Mammary epithelial cell (primary cell): ENCODE measurements at regions of chr18 and their contacts with region 1.

Region 1: GRCh38 chr18:32552421-32553030 is 81.8 kb upstream of the GAREM1 start:
- DNase-seq: peak; percentile 59
- H3K4me3 ChIP-seq: no peak overlapping the region
- H3K27ac ChIP-seq: no peak overlapping the region
- H3K4me1 ChIP-seq: no peaks in the 10 kb centered on the region
- H3K27me3 ChIP-seq: no peaks in the 10 kb centered on the region
- CTCF ChIP-seq: peak; percentile 81 to 82

Region 2: DNA sequence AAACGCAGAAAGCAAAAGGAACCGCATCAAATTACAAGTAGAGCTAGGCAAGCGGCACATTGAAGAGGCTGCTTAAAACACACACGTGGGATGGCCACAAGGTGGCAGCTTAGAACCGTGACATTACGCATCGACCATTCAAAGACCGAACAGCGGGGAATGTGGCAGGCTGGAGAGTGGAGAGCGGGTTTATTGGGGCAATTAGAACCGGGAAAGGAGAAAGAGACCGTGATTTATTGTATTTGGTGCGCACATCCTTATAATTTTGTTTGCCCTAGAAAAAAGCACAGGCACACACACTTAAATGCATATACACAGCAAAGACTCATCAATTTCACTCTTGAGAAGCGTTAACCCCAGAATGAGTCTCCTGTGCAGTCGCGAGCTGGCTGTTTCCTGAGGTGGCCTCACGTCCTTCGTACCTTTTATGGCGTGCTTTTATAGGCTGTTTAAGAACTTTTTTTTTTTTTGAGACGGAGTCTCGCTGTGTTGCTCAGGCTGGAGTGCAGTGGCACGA is 394.4 kb before region 1 on chr18:
- CTCF ChIA-PET with region 1: interaction called, 4 read pairs
- dilution Hi-C with region 1: no loop called
- in situ Hi-C with region 1: loop called (anchors 5 kb)
- intact Hi-C with region 1: loop called (anchors 1 kb)
- DNase-seq: peak; percentile 71
- H3K4me3 ChIP-seq: peak overlapping the region in 1 of 3 experiments; percentile 31
- H3K27ac ChIP-seq: no peak overlapping the region
- H3K4me1 ChIP-seq: peaks cover 5% of the 10 kb centered on the region
- H3K27me3 ChIP-seq: no peaks in the 10 kb centered on the region
- CTCF ChIP-seq: peak; percentile 76 to 78

Region 3: GRCh38 chr18:32243358-32243757 is 309.2 kb before region 1 on chr18:
- CTCF ChIA-PET with region 1: no interaction called
- dilution Hi-C with region 1: loop called (anchors 10 kb)
- in situ Hi-C with region 1: no loop called
- intact Hi-C with region 1: no loop called
- DNase-seq: no peak
- H3K4me3 ChIP-seq: no peak overlapping the region
- H3K27ac ChIP-seq: no peak overlapping the region
- H3K4me1 ChIP-seq: no peaks in the 10 kb centered on the region
- H3K27me3 ChIP-seq: no peaks in the 10 kb centered on the region
- CTCF ChIP-seq: no peak

Region 4: DNA sequence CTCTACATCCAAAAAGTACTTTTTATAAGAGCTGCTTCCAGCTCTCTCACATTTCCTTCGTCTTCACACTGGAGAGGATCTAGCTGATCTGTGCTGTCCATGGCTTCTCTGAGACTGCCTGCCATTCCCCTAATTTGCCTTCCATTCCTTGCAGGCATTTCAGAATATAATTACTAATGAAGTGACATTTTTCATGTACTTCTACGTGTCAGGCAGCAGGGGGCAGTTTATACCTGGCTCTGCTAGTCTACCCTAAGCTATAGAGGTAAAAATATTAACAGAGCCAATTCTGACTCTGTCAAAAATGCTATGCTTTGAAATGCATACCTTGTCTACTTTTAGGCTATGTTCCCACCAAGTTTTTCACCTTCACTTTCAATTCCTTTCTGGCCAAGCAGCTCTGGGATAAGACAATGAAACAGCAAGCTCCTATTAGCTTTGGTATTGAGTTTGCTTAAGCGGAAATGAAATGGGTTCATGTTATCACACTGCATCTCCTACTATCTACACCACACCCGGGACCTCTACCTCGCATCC is 280.8 kb before region 1 on chr18:
- CTCF ChIA-PET with region 1: interaction called, 13 read pairs
- dilution Hi-C with region 1: no loop called
- in situ Hi-C with region 1: loop called in 1 of 2 experiments (anchors 5 kb)
- intact Hi-C with region 1: loop called (anchors 1 kb)
- DNase-seq: peak; percentile 8
- H3K4me3 ChIP-seq: no peak overlapping the region
- H3K27ac ChIP-seq: no peak overlapping the region
- H3K4me1 ChIP-seq: no peaks in the 10 kb centered on the region
- H3K27me3 ChIP-seq: no peaks in the 10 kb centered on the region
- CTCF ChIP-seq: peak; percentile 71

Region 5: GRCh38 chr18:32276906-32277305 is 275.6 kb before region 1 on chr18:
- CTCF ChIA-PET with region 1: interaction called, 13 read pairs
- dilution Hi-C with region 1: no loop called
- in situ Hi-C with region 1: loop called (anchors 5 to 10 kb)
- intact Hi-C with region 1: no loop called
- DNase-seq: no peak
- H3K4me3 ChIP-seq: no peak overlapping the region
- H3K27ac ChIP-seq: no peak overlapping the region
- H3K4me1 ChIP-seq: no peaks in the 10 kb centered on the region
- H3K27me3 ChIP-seq: no peaks in the 10 kb centered on the region
- CTCF ChIP-seq: no peak

Region 6: DNA sequence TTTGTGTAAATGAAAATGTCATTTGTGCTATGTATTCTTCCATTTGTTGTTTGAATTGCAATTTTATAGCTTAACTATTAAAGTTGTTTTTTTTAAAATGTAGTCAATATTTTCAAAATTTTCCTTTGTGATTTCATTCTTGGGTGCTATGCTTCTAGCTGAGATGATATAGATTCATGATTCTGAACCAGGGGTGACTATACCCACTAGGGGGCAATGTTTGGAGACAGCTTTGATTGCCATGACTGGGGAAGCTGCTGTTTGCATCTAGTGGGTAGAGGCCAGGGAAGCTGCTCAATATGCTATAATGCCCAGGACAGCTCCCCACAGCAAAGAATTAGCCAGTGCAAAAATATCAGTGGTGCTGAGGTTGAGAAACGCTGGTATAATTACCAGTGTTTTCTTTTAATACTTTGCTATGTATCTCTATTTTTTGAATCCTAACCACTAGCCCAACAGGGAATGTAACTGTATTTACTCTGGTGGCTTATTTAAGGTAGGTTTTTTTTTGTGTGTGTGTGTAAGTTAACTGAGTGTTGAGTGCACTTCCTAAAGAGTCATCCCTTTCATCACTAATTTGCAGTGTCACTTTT is 262.9 kb before region 1 on chr18:
- CTCF ChIA-PET with region 1: no interaction called
- dilution Hi-C with region 1: no loop called
- in situ Hi-C with region 1: loop called in 1 of 2 experiments (anchors 10 kb)
- intact Hi-C with region 1: loop called (anchors 1 kb)
- DNase-seq: peak; percentile 53
- H3K4me3 ChIP-seq: no peak overlapping the region
- H3K27ac ChIP-seq: no peak overlapping the region
- H3K4me1 ChIP-seq: peaks cover 6% of the 10 kb centered on the region
- H3K27me3 ChIP-seq: no peaks in the 10 kb centered on the region
- CTCF ChIP-seq: peak; percentile 65 to 83